ENCODE measurements at regions of chr1 and their contacts with region 1.

Region 1: DNA sequence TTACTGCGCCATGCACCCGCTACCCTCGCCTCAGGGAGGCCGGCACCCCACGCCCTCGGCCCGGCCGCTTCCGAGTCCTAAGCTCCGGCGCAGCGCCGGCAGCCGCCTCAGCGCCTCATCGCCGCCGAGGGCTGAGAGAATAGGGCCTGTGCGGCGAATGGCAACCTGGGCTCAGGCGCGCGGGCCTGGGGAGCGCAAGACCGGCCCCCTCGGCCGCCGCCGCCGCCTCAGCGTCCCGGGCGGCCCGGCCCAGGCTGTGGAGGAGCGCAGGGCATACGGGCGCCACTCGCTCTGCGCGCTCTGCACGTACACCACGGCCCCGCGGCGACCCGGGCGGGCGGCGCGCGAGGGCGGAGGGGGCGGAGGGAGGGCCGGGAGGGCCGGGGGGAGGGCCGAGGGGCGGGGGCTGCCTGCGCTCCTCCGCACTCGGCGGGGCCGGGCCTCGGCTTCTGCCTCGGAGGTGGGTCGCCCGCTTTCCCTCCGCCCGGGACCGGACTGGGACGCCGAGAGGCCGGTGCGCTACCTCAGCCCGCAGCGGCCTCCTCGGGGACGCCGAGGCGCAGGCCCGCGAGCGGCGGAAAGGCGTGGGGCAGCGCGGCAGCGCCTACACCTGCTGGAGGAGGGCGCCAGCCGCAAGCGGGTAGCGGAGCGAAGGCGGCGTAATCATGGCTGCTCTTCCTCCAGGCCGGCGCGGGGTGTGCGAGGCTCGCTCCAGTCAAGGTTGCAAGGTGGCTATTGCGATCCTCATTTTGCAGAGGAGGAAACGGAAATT is at the start of gene EGLN1:
- DNase-seq: peak; percentile 48
- ATAC-seq: peak; percentile 87
- H3K4me3 ChIP-seq: peak within 1 kb of the TSS; percentile 92
- H3K27ac ChIP-seq: peak within 1 kb of the TSS; percentile 81
- H3K4me1 ChIP-seq: no peaks in the 10 kb centered on the region
- H3K27me3 ChIP-seq: no peaks in the 10 kb centered on the region; a peak in 1 of 4 replicates
- CTCF ChIP-seq: peak; percentile 35 to 61 (median 49); a peak in 4 of 6 replicates
- EP300 ChIP-seq: no peak; a peak in 1 of 4 replicates
- POLR2A ChIP-seq: peak; percentile 88
- RAD21 ChIP-seq: peak; percentile 57
- polyA plus RNA-seq, gene EGLN1: 2.4 to 3.0 TPM

Region 2: GRCh38 chr1:231337472-231338269 is 84.5 kb before region 1 on chr1 and contains the start of gene EXOC8:
- CTCF ChIA-PET with region 1: interaction called, 7 read pairs
- POLR2A ChIA-PET with region 1: interaction called, 3 read pairs
- RAD21 ChIA-PET with region 1: interaction called, 13 read pairs
- SMC1A ChIA-PET with region 1: interaction called, 10 read pairs
- in situ Hi-C with region 1: no loop called
- intact Hi-C with region 1: no loop called
- DNase-seq: peak; percentile 99
- ATAC-seq: peak; percentile 84
- H3K4me3 ChIP-seq: peak within 1 kb of the TSS; percentile 91
- H3K27ac ChIP-seq: peak within 1 kb of the TSS; percentile 95
- H3K4me1 ChIP-seq: peaks cover 8% of the 10 kb centered on the region
- H3K27me3 ChIP-seq: no peaks in the 10 kb centered on the region
- CTCF ChIP-seq: peak; percentile 3 to 29 (median 10); a peak in 2 of 6 replicates
- EP300 ChIP-seq: no peak
- POLR2A ChIP-seq: peak; percentile 88
- RAD21 ChIP-seq: no peak
- polyA plus RNA-seq, gene EXOC8: 2.0 to 3.2 TPM

Region 3: GRCh38 chr1:231512147-231512698 is 90.0 kb after region 1 on chr1:
- CTCF ChIA-PET with region 1: interaction called, 3 read pairs
- POLR2A ChIA-PET with region 1: no interaction called
- RAD21 ChIA-PET with region 1: interaction called, 4 read pairs
- SMC1A ChIA-PET with region 1: interaction called, 3 read pairs
- in situ Hi-C with region 1: no loop called
- intact Hi-C with region 1: loop called (anchors 5 kb)
- DNase-seq: peak; percentile 20
- ATAC-seq: peak; percentile 69
- H3K4me3 ChIP-seq: no peak overlapping the region
- H3K27ac ChIP-seq: no peak overlapping the region
- H3K4me1 ChIP-seq: peaks cover 7% of the 10 kb centered on the region
- H3K27me3 ChIP-seq: no peaks in the 10 kb centered on the region
- CTCF ChIP-seq: no peak
- EP300 ChIP-seq: no peak; a peak in 1 of 4 replicates
- POLR2A ChIP-seq: no peak
- RAD21 ChIP-seq: no peak

Region 4: DNA sequence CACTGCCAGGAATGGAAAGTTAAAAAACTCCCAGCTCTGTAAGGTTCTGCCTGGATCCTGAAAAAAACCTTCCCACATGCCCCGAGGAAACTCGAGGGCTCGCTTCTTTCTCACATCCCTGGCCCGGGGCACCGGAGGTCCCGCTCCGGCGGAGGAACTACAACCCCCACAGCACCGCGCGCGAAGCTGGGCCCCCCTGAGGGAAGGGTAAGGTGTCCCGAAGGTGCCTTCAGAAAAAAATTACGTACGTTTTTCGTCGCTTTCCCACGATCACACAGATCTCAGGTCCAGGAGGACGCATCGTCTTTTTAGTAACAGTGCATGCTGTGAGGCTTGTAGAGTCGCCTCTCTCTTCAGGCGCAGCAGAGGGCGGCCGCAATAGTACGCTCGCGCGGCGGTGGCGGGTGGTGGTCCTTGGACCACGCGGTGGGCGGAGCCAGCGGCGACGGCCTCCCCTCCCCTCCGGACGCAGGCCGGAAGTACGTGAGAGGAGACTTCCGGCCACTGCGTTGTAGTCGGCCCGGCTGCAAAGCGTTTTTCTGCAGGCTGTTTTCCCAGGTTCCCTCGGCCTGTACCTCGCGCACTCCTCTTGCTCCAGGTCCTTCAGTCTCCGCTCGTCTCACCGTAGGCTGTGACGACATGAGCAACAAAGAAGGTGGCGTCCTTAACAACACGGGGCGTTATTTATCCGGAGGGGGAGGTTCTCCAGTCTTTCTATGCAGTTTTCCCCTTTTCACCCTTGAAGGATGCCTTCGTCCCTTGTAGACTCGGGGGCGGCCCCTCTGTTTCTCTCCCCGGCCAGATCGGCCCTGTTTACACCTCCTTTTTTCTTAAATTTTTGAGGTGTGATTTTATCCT is 106.2 kb after region 1 on chr1 and contains the start of gene TSNAX:
- CTCF ChIA-PET with region 1: interaction called, 4 read pairs
- POLR2A ChIA-PET with region 1: interaction called, 3 read pairs
- RAD21 ChIA-PET with region 1: interaction called, 3 read pairs
- SMC1A ChIA-PET with region 1: interaction called, 4 read pairs
- in situ Hi-C with region 1: loop called (anchors 5 kb)
- intact Hi-C with region 1: loop called (anchors 1 kb)
- DNase-seq: peak; percentile 84
- ATAC-seq: peak; percentile 93
- H3K4me3 ChIP-seq: peak within 1 kb of the TSS; percentile 93
- H3K27ac ChIP-seq: peak within 1 kb of the TSS; percentile 97
- H3K4me1 ChIP-seq: peaks cover 5% of the 10 kb centered on the region; the same call in 1 of the 2 replicates
- H3K27me3 ChIP-seq: no peaks in the 10 kb centered on the region
- CTCF ChIP-seq: no peak
- EP300 ChIP-seq: no peak; a peak in 1 of 4 replicates
- POLR2A ChIP-seq: peak; percentile 93
- RAD21 ChIP-seq: no peak
- polyA plus RNA-seq, gene TSNAX: 35.0 to 42.4 TPM

Region 5: GRCh38 chr1:231541842-231542241 is 119.7 kb after region 1 on chr1:
- CTCF ChIA-PET with region 1: no interaction called
- POLR2A ChIA-PET with region 1: no interaction called
- RAD21 ChIA-PET with region 1: no interaction called
- SMC1A ChIA-PET with region 1: no interaction called
- in situ Hi-C with region 1: no loop called
- intact Hi-C with region 1: no loop called
- DNase-seq: no peak
- ATAC-seq: no peak
- H3K4me3 ChIP-seq: no peak overlapping the region
- H3K27ac ChIP-seq: no peak overlapping the region
- H3K4me1 ChIP-seq: no peaks in the 10 kb centered on the region
- H3K27me3 ChIP-seq: no peaks in the 10 kb centered on the region
- CTCF ChIP-seq: no peak
- EP300 ChIP-seq: no peak
- POLR2A ChIP-seq: no peak
- RAD21 ChIP-seq: no peak

Region 6: GRCh38 chr1:231590453-231591198 is 168.4 kb after region 1 on chr1:
- CTCF ChIA-PET with region 1: no interaction called
- POLR2A ChIA-PET with region 1: interaction called, 4 read pairs
- RAD21 ChIA-PET with region 1: no interaction called
- SMC1A ChIA-PET with region 1: no interaction called
- in situ Hi-C with region 1: no loop called
- intact Hi-C with region 1: loop called (anchors 5 kb)
- DNase-seq: no peak
- ATAC-seq: peak; percentile 93
- H3K4me3 ChIP-seq: no peak overlapping the region
- H3K27ac ChIP-seq: no peak overlapping the region
- H3K4me1 ChIP-seq: no peaks in the 10 kb centered on the region
- H3K27me3 ChIP-seq: no peaks in the 10 kb centered on the region
- CTCF ChIP-seq: peak; percentile 74 to 88 (median 80)
- EP300 ChIP-seq: no peak
- POLR2A ChIP-seq: no peak
- RAD21 ChIP-seq: peak; percentile 84

Region 7: DNA sequence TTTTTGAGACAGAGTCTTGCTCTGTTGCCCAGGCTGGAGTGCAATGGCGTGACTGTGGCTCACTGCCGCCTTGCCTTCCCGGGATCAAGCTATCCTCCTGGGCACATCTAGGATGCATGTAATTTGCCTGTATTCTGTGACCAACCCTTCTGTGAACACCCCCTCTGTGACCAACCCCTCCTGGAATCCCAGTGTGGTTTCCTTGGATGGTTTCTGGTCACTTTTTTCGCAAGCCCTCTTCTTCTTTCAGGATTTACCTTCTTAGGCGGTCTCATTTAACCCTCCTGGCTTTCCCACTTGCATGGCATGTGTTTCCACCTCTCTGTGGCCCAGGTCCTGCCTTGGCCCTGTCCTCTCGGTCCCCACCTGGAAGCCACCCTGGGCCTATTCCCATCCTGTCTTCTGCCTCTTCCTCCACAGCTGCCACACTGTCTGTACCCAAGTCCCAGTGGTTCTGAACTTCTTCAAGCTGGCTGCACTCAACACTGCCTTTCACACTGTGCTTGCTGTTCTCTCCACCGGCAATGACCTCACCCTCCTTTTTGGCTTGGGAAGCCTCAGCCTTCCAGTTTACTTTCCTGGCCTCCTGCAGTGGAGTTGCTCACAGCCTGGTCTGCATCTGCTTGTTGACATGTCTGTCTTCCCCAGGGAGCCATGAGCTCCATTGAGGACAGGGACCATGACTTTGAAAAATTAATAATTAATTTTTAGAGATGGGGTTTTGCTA is 261.4 kb after region 1 on chr1:
- CTCF ChIA-PET with region 1: no interaction called
- POLR2A ChIA-PET with region 1: no interaction called
- RAD21 ChIA-PET with region 1: no interaction called
- SMC1A ChIA-PET with region 1: no interaction called
- in situ Hi-C with region 1: no loop called
- intact Hi-C with region 1: no loop called
- DNase-seq: no peak
- ATAC-seq: no peak
- H3K4me3 ChIP-seq: no peak overlapping the region
- H3K27ac ChIP-seq: no peak overlapping the region
- H3K4me1 ChIP-seq: no peaks in the 10 kb centered on the region
- H3K27me3 ChIP-seq: no peaks in the 10 kb centered on the region
- CTCF ChIP-seq: no peak
- EP300 ChIP-seq: no peak
- POLR2A ChIP-seq: no peak
- RAD21 ChIP-seq: no peak